B cell (primary cell): ENCODE measurements at regions of chr7 and their contacts with region 1.

Region 1: DNA sequence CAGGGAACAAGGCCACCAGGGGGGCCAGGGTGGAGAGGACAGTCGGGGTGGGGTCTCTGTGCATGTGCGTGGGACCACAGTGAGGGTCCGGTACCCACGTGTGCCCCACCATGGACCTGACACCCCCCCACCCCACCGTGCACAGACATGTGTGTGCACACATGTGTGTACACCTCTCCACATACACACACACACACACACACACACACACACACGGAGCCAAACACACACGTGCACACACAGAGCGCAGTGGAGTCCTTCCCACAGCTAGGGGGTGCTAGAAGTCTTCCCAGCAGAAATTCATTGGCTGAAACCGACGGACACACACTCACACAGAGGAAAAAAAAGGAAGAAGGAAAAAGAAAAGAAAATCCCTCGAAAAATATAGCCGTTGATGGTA is 42.8 kb upstream of the GNA12 start:
- DNase-seq: peak; percentile 78
- ATAC-seq: peak; percentile 76
- H3K4me3 ChIP-seq: no peak overlapping the region
- H3K4me3 Mint-ChIP-seq: no peak overlapping the region
- H3K27ac ChIP-seq: no peak overlapping the region
- H3K27ac Mint-ChIP-seq: no peak overlapping the region
- H3K4me1 ChIP-seq: peaks cover 0 to 4% of the 10 kb centered on the region in 2 donors
- H3K4me1 Mint-ChIP-seq: peaks cover 5% of the 10 kb centered on the region
- H3K27me3 ChIP-seq: no peaks in the 10 kb centered on the region
- H3K27me3 Mint-ChIP-seq: no peaks in the 10 kb centered on the region
- CTCF ChIP-seq: peak; percentile 65

Region 2: DNA sequence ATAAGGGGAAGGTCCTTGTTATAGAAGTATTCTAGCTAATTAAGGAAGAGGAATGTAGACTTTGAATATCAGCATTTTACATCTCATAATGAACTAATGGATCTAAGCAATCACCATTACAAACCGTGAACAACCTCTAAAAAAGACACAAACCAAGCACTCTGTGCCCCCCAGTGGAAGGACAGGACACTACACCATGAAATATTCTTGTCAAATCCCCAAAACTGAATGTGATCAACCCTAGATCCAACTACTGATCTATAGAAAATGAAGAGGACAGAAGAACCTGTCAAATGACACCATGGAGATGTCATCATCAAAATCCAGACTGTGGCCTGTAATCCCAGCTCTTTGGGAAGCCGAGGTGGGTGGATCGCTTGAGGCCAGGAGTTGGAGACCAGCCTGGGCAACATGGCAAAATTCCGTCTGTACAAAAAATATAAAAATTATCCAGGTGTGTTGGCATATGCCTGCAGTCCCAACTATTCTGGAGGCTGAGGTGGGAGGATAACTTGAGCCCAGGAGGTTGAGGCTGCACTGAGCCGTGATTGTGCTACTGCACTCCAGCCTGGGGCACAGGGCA is 268.1 kb after region 1 on chr7:
- CTCF ChIA-PET with region 1: interaction called, 38 read pairs
- POLR2A ChIA-PET with region 1: interaction called, 3 read pairs
- intact Hi-C with region 1: loop called (anchors 1 kb)
- DNase-seq: peak; percentile 78
- ATAC-seq: peak; percentile 72
- H3K4me3 ChIP-seq: no peak overlapping the region
- H3K4me3 Mint-ChIP-seq: no peak overlapping the region
- H3K27ac ChIP-seq: no peak overlapping the region
- H3K27ac Mint-ChIP-seq: no peak overlapping the region
- H3K4me1 ChIP-seq: peaks cover 22 to 30% of the 10 kb centered on the region in 2 donors
- H3K4me1 Mint-ChIP-seq: peaks cover 33% of the 10 kb centered on the region
- H3K27me3 ChIP-seq: no peaks in the 10 kb centered on the region
- H3K27me3 Mint-ChIP-seq: peaks cover 8% of the 10 kb centered on the region
- CTCF ChIP-seq: peak; percentile 88

Region 3: DNA sequence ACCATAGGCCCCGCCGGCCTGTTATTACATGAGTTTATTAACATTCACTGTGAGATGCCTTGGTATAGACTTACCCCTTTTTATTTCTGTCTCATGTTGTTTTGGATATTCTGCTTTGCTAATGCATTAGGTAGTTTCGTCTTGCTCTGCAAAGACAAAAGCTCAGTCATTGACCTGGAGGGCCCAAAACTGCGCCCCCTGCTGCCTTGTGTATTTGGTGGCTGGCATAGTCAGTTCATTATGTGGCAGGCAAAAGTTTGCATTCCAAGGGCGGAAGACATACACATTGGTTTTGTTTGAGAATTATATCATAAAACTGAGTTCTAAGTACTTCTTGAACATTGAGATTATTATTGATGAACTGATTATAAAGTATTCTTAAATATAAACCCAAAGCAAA is 786.6 kb after region 1 on chr7:
- CTCF ChIA-PET with region 1: interaction called, 4 read pairs
- POLR2A ChIA-PET with region 1: no interaction called
- intact Hi-C with region 1: loop called (anchors 5 kb)
- DNase-seq: peak; percentile 20
- ATAC-seq: no peak
- H3K4me3 ChIP-seq: no peak overlapping the region
- H3K4me3 Mint-ChIP-seq: no peak overlapping the region
- H3K27ac ChIP-seq: no peak overlapping the region
- H3K27ac Mint-ChIP-seq: no peak overlapping the region
- H3K4me1 ChIP-seq: peaks cover 5 to 7% of the 10 kb centered on the region in 2 donors
- H3K4me1 Mint-ChIP-seq: peaks cover 12% of the 10 kb centered on the region
- H3K27me3 ChIP-seq: no peaks in the 10 kb centered on the region
- H3K27me3 Mint-ChIP-seq: no peaks in the 10 kb centered on the region
- CTCF ChIP-seq: no peak

Region 4: GRCh38 chr7:3897438-3898385 is 1010.8 kb after region 1 on chr7:
- CTCF ChIA-PET with region 1: no interaction called
- POLR2A ChIA-PET with region 1: no interaction called
- intact Hi-C with region 1: loop called (anchors 1 kb)
- DNase-seq: peak; percentile 71
- ATAC-seq: peak; percentile 62
- H3K4me3 ChIP-seq: no peak overlapping the region
- H3K4me3 Mint-ChIP-seq: no peak overlapping the region
- H3K27ac ChIP-seq: no peak overlapping the region
- H3K27ac Mint-ChIP-seq: no peak overlapping the region
- H3K4me1 ChIP-seq: no peaks in the 10 kb centered on the region
- H3K4me1 Mint-ChIP-seq: no peaks in the 10 kb centered on the region
- H3K27me3 ChIP-seq: peaks cover 0 to 3% (median 1%) of the 10 kb centered on the region in 4 experiments
- H3K27me3 Mint-ChIP-seq: peaks cover 20% of the 10 kb centered on the region
- CTCF ChIP-seq: peak; percentile 91